ENCODE measurements at regions of chr11 and their contacts with region 1.

Region 1: GRCh38 chr11:119205574-119206510 is at the start of gene CBL:
- DNase-seq: peak; percentile 97
- ATAC-seq: peak; percentile 87
- H3K4me3 Mint-ChIP-seq: peak within 1 kb of the TSS; percentile 99
- H3K27ac Mint-ChIP-seq: peak within 1 kb of the TSS; percentile 92
- H3K4me1 Mint-ChIP-seq: peaks cover 28% of the 10 kb centered on the region
- H3K27me3 Mint-ChIP-seq: no peaks in the 10 kb centered on the region
- total RNA-seq, gene CBL: 43.6 to 43.7 TPM

Region 2: GRCh38 chr11:119168471-119169281 is 37.2 kb before region 1 on chr11 and contains the start of gene NLRX1:
- CTCF ChIA-PET with region 1: interaction called, 13 read pairs
- POLR2A ChIA-PET with region 1: interaction called, 5 read pairs
- DNase-seq: peak; percentile 92
- ATAC-seq: peak; percentile 96
- H3K4me3 Mint-ChIP-seq: peak within 1 kb of the TSS; percentile 86
- H3K27ac Mint-ChIP-seq: peak within 1 kb of the TSS; percentile 92
- H3K4me1 Mint-ChIP-seq: peaks cover 30% of the 10 kb centered on the region
- H3K27me3 Mint-ChIP-seq: no peaks in the 10 kb centered on the region
- total RNA-seq, gene NLRX1: 24.6 to 24.8 TPM

Region 3: DNA sequence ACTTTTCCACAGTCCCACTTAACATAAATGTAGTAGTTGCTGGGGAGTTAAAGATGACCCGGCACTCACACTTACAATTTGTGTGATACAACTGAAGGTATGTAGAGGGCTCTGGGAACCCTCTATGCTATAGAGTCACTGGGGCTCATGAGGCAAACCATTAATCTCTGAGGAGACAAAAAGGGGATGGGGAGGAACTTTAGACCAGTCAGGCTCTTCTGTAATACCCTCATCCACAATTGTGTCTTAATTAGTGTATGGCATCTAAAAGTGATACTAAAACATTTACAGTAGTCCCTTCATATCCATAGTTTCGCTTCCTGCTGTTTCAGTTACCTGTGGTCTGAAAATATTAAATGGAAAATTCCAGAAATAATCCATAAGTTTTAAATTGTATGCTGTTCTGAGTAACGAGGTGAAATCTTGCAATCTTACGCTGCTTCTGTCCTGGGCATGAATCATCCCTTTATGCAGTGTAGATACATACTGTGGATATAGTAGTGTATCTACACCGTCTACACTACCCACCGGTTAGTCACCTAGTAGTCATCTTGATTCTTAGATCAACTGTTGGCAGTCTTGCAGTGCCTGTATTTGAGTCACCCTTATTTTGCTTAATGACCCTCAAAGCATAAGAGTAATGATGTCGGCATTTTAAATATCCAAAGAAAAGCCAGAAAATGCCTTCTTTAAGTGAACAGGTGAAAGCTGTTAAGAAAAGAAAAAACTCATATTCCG is 12.5 kb after region 1 on chr11:
- CTCF ChIA-PET with region 1: interaction called, 11 read pairs
- POLR2A ChIA-PET with region 1: no interaction called
- DNase-seq: no peak
- ATAC-seq: no peak
- H3K4me3 Mint-ChIP-seq: no peak overlapping the region
- H3K27ac Mint-ChIP-seq: no peak overlapping the region
- H3K4me1 Mint-ChIP-seq: peaks cover 25% of the 10 kb centered on the region
- H3K27me3 Mint-ChIP-seq: no peaks in the 10 kb centered on the region

Region 4: GRCh38 chr11:119262668-119263351 is 57.0 kb after region 1 on chr11:
- CTCF ChIA-PET with region 1: interaction called, 83 read pairs
- POLR2A ChIA-PET with region 1: interaction called, 12 read pairs
- DNase-seq: peak; percentile 47
- ATAC-seq: peak; percentile 63
- H3K4me3 Mint-ChIP-seq: no peak overlapping the region
- H3K27ac Mint-ChIP-seq: no peak overlapping the region
- H3K4me1 Mint-ChIP-seq: peaks cover 50% of the 10 kb centered on the region
- H3K27me3 Mint-ChIP-seq: no peaks in the 10 kb centered on the region

Region 5: GRCh38 chr11:119334174-119334930 is 128.5 kb after region 1 on chr11 and contains the start of gene RNF26:
- CTCF ChIA-PET with region 1: interaction called, 17 read pairs
- POLR2A ChIA-PET with region 1: interaction called, 5 read pairs
- DNase-seq: peak; percentile 98
- ATAC-seq: peak; percentile 96
- H3K4me3 Mint-ChIP-seq: peak within 1 kb of the TSS; percentile 92
- H3K27ac Mint-ChIP-seq: peak within 1 kb of the TSS; percentile 96
- H3K4me1 Mint-ChIP-seq: peaks cover 60% of the 10 kb centered on the region
- H3K27me3 Mint-ChIP-seq: peaks cover 20% of the 10 kb centered on the region
- total RNA-seq, gene RNF26: 40.5 to 41.8 TPM

Measured in activated CD8-positive, alpha-beta T cell treated with anti-CD3 and anti-CD28 coated beads, Interleukin-2, amount 10 ng/mL, durations not matched to agents 7 days and 5 days (primary cell).